Vagina (tissue), 2 donors: ENCODE measurements at regions of chr10 and their contacts with region 1.

Region 1: GRCh38 chr10:104170610-104171254 is 48.8 kb downstream of the SFR1 start:
- DNase-seq: no peak
- H3K4me3 ChIP-seq: no peak overlapping the region
- H3K27ac ChIP-seq: no peak overlapping the region
- H3K4me1 ChIP-seq: no peaks in the 10 kb centered on the region
- H3K27me3 ChIP-seq: no peaks in the 10 kb centered on the region
- CTCF ChIP-seq: no peak
- POLR2A ChIP-seq: no peak

Region 2: GRCh38 chr10:104104926-104105325 is 65.8 kb before region 1 on chr10:
- intact Hi-C with region 1: no loop called
- DNase-seq: no peak
- H3K4me3 ChIP-seq: no peak overlapping the region
- H3K27ac ChIP-seq: no peak overlapping the region
- H3K4me1 ChIP-seq: no peaks in the 10 kb centered on the region
- H3K27me3 ChIP-seq: no peaks in the 10 kb centered on the region
- CTCF ChIP-seq: no peak
- POLR2A ChIP-seq: no peak

Region 3: GRCh38 chr10:104146882-104147281 is 23.9 kb before region 1 on chr10:
- intact Hi-C with region 1: loop called (anchors 1 kb)
- DNase-seq: no peak
- H3K4me3 ChIP-seq: no peak overlapping the region
- H3K27ac ChIP-seq: no peak overlapping the region
- H3K4me1 ChIP-seq: no peaks in the 10 kb centered on the region
- H3K27me3 ChIP-seq: no peaks in the 10 kb centered on the region
- CTCF ChIP-seq: no peak
- POLR2A ChIP-seq: no peak